Activated naive CD4-positive, alpha-beta T cell treated with anti-CD3 and anti-CD28 coated beads for 36 hours (primary cell): ENCODE measurements at regions of chr2 and their contacts with region 1.

Region 1: DNA sequence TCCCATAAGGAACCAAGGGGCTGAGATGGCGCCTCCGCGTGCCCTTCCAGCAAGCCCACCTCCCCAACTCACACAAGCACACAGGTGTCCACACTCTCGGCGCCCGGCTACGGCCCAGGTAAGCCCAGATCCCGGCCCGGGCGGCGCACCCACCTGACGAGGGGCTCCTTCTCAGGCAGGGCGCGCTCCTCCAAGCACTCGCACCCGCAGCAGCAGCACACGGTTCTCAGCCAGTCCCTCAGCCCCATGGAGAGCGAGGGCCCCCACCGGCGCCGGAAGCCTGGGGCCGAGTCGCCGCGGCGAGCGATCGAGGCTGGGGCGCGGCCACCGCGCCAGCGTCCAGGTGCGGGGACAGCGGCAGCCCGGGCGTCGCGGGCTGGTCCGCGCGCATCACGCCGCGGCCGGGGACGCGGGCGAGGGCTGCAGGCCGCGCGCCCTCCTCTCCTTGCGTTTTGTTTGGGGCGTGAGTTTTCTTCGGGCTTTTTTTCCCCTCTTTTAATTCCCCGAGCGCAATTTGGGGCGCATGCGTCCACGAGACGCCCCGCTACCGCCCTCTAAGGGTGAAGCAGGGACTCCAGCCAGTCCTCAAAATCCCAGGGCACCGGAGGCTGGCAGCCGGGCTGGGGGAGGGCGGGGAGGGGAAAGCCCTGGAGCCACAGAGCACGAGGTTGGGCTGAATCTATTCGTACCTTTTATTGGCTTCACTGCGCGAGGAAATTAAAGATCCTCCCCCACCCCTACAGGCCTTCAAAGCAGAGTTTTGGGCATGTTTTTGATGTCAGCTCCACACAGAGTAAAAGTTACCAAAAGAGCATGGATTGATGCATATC is at the start of gene MREG:
- DNase-seq: peak; percentile 91
- H3K4me3 Mint-ChIP-seq: peak within 1 kb of the TSS; percentile 81
- H3K27ac Mint-ChIP-seq: no peak within 1 kb of the TSS
- H3K4me1 Mint-ChIP-seq: peaks cover 51% of the 10 kb centered on the region
- H3K27me3 Mint-ChIP-seq: no peaks in the 10 kb centered on the region
- total RNA-seq, gene MREG: 3.1 to 3.9 TPM

Region 2: GRCh38 chr2:215862351-215862771 is 150.9 kb before region 1 on chr2:
- CTCF ChIA-PET with region 1: no interaction called
- intact Hi-C with region 1: no loop called
- DNase-seq: no peak
- H3K4me3 Mint-ChIP-seq: no peak overlapping the region
- H3K27ac Mint-ChIP-seq: no peak overlapping the region
- H3K4me1 Mint-ChIP-seq: no peaks in the 10 kb centered on the region
- H3K27me3 Mint-ChIP-seq: peaks cover 2% of the 10 kb centered on the region

Region 3: GRCh38 chr2:215970425-215970824 is 42.9 kb before region 1 on chr2:
- CTCF ChIA-PET with region 1: no interaction called
- intact Hi-C with region 1: loop called (anchors 1 kb)
- DNase-seq: peak; percentile 56
- H3K4me3 Mint-ChIP-seq: no peak overlapping the region
- H3K27ac Mint-ChIP-seq: peak overlapping the region; percentile 0
- H3K4me1 Mint-ChIP-seq: peaks cover 24% of the 10 kb centered on the region
- H3K27me3 Mint-ChIP-seq: no peaks in the 10 kb centered on the region

Region 4: DNA sequence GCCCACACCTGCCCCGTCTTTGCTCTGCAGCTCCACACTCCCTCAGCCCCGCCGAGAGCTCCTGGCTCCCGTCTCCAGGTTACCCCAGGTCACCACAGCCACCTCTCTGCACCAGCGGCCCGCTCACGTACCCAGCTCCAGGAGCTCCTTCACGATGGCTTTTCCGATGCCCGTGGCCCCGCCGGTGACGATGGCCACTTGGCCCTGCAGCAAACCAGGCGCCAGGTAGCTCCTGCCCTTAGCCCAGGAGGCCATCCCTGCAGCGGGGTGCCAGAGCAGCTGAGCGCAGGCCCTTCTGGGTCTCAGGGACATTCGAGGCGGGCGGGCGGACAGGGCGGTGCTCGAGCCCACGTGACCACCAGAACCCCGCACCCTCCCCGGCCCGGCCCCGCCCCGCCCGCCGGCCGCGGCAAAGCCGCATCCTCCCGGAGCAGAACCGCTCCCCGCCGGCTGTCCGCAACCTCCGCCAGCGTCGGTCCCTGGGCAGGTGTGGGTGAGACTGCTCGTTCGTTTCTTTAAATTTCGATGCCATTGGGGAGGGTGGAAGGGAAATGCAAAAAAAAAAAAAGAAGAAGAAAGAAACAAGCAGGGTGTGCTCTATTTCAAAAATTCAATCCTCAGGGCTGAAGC is 68.3 kb after region 1 on chr2 and contains the starts of genes PECR and TMEM169:
- CTCF ChIA-PET with region 1: no interaction called
- intact Hi-C with region 1: no loop called
- DNase-seq: peak; percentile 83
- H3K4me3 Mint-ChIP-seq: peak within 1 kb of the TSS; percentile 87
- H3K27ac Mint-ChIP-seq: peak within 1 kb of the TSS; percentile 75
- H3K4me1 Mint-ChIP-seq: peaks cover 58% of the 10 kb centered on the region
- H3K27me3 Mint-ChIP-seq: no peaks in the 10 kb centered on the region
- total RNA-seq, gene PECR: 18.8 to 20.9 TPM
- total RNA-seq, gene TMEM169: 0.57 to 0.81 TPM

Region 5: DNA sequence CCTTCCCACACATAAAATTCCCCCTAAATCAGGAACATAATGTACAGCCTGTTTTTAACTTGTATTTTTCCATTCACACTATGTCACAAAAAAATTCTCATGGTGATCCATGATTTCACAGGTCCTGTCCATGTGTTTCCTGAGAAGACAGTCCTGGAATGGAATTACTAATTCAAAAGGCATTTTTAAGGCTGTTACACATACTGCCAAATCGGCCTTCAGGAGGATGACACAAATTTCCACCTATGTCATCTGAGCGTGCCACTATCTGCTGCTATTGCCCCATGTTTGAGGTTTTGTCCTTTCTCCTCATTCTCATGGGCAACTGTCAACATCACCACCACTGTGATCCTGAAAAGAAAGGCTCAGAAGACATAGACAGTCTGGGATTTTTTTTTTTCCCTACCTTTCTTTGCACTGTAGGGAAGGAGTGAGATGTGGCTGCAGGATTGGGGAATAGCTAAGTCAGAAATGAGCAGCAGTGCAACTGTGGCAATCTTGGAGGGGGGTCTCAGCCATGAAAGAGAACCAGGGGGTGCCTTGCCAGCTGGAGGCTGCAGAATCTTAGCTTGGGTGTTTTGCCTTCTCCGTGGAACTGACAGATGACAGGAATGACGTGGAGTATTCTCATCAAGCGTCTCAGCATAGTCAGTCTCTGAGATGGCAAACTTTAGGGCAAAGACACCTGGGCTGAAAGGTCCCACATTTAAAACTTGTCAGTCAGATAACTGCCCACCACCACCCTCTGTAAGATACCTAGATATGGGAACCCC is 285.6 kb after region 1 on chr2:
- CTCF ChIA-PET with region 1: no interaction called
- intact Hi-C with region 1: no loop called
- DNase-seq: no peak
- H3K4me3 Mint-ChIP-seq: no peak overlapping the region
- H3K27ac Mint-ChIP-seq: no peak overlapping the region
- H3K4me1 Mint-ChIP-seq: peaks cover 5% of the 10 kb centered on the region
- H3K27me3 Mint-ChIP-seq: no peaks in the 10 kb centered on the region